ENCODE measurements at regions of chr5 and their contacts with region 1.

Region 1: DNA sequence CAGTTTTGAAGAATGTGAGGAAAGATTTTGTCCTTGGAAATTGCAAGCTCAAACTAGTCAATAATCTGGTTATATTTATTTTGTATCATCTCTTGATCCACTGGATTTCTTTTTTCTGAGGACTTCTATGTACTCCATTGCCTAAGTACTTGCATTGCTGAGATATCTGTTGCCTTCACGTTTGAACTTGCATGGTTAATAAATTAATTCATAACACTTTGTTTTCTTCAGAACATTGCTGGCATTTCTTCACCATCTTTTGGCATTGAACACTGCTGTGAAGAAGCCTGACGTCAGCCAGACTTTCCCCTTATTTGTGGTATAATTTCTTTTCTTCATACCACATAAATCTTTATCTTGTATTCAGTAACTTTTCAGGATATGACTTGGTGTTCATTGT is 246.0 kb upstream of the KIF2A start:
- DNase-seq: no peak
- H3K4me3 ChIP-seq: no peak overlapping the region
- H3K27ac ChIP-seq: no peak overlapping the region
- H3K4me1 ChIP-seq: no peaks in the 10 kb centered on the region
- H3K27me3 ChIP-seq: no peaks in the 10 kb centered on the region
- CTCF ChIP-seq: no peak
- EP300 ChIP-seq: no peak
- POLR2A ChIP-seq: no peak

Region 2: GRCh38 chr5:62011089-62011664 is 48.8 kb before region 1 on chr5:
- in situ Hi-C with region 1: no loop called
- intact Hi-C with region 1: loop called (anchors 1 kb)
- DNase-seq: no peak
- H3K4me3 ChIP-seq: no peak overlapping the region
- H3K27ac ChIP-seq: no peak overlapping the region
- H3K4me1 ChIP-seq: no peaks in the 10 kb centered on the region
- H3K27me3 ChIP-seq: no peaks in the 10 kb centered on the region
- CTCF ChIP-seq: no peak
- EP300 ChIP-seq: no peak
- POLR2A ChIP-seq: no peak